GM10248 (cell line): ENCODE measurements at regions of chr3 and their contacts with region 1.

Region 1: GRCh38 chr3:105505170-105505569 is 138.5 kb downstream of the ALCAM start:
- DNase-seq: no peak
- CTCF ChIP-seq: no peak

Region 2: GRCh38 chr3:105431200-105431599 is 74.0 kb before region 1 on chr3:
- CTCF ChIA-PET with region 1: no interaction called
- POLR2A ChIA-PET with region 1: no interaction called
- DNase-seq: no peak
- CTCF ChIP-seq: no peak

Region 3: DNA sequence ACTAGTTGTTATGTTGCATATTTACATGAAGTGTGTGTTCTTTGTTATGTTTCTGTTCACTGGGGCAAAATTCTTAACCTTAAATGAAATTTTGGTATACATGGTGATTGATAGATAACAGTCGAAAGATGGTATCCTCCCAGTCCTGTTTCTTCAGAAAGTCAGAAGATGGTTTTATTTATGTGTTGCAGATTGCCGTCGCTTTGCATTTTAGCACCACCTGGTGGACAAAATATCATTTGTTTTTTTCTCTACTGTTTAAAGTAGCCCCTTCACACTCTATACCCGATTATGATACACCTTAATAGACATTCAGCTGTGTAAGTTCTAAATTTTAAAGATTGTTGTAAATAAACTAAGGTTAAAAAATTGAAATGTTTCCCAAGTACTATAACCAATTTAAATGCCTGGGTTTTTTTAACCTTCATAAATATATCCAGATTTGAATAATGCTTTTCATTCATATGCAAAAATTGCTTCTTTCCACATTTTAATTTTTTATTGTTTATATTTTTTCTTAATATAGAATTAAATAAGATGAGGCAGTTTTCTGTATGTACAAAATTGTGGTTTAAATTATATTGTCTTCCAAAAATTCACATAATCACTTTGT is 13.7 kb after region 1 on chr3:
- CTCF ChIA-PET with region 1: interaction called, 50 read pairs
- POLR2A ChIA-PET with region 1: no interaction called
- DNase-seq: peak; percentile 45
- CTCF ChIP-seq: peak; percentile 50

Region 4: GRCh38 chr3:105533960-105534359 is 28.8 kb after region 1 on chr3:
- CTCF ChIA-PET with region 1: no interaction called
- POLR2A ChIA-PET with region 1: no interaction called
- DNase-seq: no peak
- CTCF ChIP-seq: no peak